ENCODE measurements at regions of chr14 and their contacts with region 1.

Region 1: DNA sequence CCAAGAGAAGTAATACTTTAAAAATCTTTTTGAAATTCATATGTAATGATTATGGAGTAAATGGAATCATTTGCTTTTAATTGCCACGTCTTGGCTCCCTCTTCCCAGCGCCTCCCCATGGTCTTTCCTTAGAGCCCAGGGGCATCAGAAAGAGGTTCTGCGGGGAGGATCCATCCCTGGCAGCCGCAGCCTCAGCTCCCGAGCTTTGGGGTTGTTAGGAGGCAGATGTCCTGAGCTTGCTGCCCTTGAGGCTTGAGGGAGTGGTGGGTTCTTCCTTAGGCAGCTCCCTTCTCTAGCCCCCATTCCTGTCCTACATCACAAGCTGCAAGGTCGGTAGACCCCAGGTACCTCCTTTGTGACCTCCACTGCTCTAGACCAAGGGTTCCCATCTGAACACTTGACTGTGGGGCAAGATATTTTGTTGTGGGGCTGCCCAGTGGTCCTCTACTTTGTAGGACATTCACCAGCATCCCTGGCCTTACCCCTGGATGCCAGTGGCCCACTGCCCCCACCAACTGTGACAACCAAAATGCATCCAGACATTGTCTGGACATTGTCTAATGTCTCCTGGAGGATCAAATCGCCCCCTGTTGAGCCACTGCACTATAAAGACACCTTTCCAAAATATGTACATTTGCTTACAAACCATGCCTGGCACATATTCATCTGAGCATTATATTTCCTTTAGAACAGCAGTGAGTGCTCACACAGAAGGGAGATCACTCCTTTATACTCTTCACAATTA is 6.3 kb downstream of the PPP2R5C start:
- DNase-seq: no peak
- ATAC-seq: no peak
- H3K4me3 Mint-ChIP-seq: no peak overlapping the region
- H3K27ac Mint-ChIP-seq: no peak overlapping the region
- H3K4me1 Mint-ChIP-seq: peaks cover 39% of the 10 kb centered on the region
- H3K27me3 Mint-ChIP-seq: no peaks in the 10 kb centered on the region
- CTCF ChIP-seq: no peak

Region 2: DNA sequence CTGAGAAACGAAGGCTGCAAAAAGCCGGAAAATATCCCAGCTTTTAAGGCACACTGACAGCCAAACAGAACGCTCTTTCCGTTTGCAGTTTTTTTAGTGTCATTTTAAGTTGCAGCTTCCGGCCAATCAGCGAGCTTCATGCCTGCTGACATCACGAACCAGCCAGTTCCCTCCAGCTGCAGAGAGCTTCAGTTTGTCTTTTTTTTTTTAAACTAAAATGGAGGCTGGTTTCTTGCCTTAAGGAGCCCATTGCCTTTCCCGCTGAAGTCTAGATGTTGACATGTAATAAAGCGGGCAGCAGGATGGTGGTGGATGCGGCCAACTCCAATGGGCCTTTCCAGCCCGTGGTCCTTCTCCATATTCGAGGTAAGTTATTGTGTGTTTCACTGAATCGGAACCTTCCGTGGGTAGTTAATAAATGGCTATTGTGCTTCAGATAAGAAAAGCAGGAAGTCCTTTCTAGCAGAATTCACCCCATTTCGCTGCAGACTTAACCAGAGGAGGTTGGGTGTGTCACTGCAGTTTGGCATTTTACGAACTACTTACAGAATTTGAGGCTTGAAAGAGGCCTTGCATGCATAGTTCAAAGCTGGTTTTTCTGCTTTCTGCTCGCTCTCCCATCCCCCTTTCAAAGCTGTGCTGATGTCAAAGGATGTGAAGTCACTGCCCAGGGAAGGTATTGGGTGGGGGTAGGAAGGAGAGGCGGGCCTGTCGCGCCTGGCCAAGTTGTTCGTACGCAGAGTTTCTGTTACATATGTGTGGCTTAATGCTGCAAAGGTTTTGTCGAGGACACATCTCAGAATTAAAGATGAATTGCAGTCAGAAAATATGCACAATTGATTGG is 42.1 kb after region 1 on chr14:
- CTCF ChIA-PET with region 1: interaction called, 42 read pairs
- POLR2A ChIA-PET with region 1: interaction called, 17 read pairs
- intact Hi-C with region 1: loop called (anchors 5 kb)
- DNase-seq: peak; percentile 92
- ATAC-seq: peak; percentile 90
- H3K4me3 Mint-ChIP-seq: peak overlapping the region; percentile 79
- H3K27ac Mint-ChIP-seq: peak overlapping the region; percentile 95
- H3K4me1 Mint-ChIP-seq: peaks cover 38% of the 10 kb centered on the region
- H3K27me3 Mint-ChIP-seq: no peaks in the 10 kb centered on the region
- CTCF ChIP-seq: no peak

Region 3: GRCh38 chr14:101843665-101844064 is 75.9 kb after region 1 on chr14:
- CTCF ChIA-PET with region 1: interaction called, 49 read pairs
- POLR2A ChIA-PET with region 1: interaction called, 3 read pairs
- intact Hi-C with region 1: loop called (anchors 5 kb)
- DNase-seq: peak; percentile 81
- ATAC-seq: peak; percentile 65
- H3K4me3 Mint-ChIP-seq: no peak overlapping the region
- H3K27ac Mint-ChIP-seq: peak overlapping the region; percentile 79
- H3K4me1 Mint-ChIP-seq: peaks cover 82% of the 10 kb centered on the region
- H3K27me3 Mint-ChIP-seq: no peaks in the 10 kb centered on the region
- CTCF ChIP-seq: peak; percentile 64

Region 4: GRCh38 chr14:101876555-101876938 is 108.8 kb after region 1 on chr14:
- CTCF ChIA-PET with region 1: interaction called, 21 read pairs
- POLR2A ChIA-PET with region 1: interaction called, 6 read pairs
- intact Hi-C with region 1: loop called (anchors 5 kb)
- DNase-seq: peak; percentile 90
- ATAC-seq: peak; percentile 69
- H3K4me3 Mint-ChIP-seq: peak overlapping the region; percentile 55
- H3K27ac Mint-ChIP-seq: peak overlapping the region; percentile 92
- H3K4me1 Mint-ChIP-seq: peaks cover 84% of the 10 kb centered on the region
- H3K27me3 Mint-ChIP-seq: no peaks in the 10 kb centered on the region
- CTCF ChIP-seq: no peak

Measured in activated CD8-positive, alpha-beta T cell treated with anti-CD3 and anti-CD28 coated beads for 36 hours (primary cell).